ENCODE measurements at regions of chr1 and their contacts with region 1.

Region 1: GRCh38 chr1:163186862-163187261 is 15.9 kb downstream of the RGS5 start:
- DNase-seq: no peak
- ATAC-seq: no peak

Region 2: DNA sequence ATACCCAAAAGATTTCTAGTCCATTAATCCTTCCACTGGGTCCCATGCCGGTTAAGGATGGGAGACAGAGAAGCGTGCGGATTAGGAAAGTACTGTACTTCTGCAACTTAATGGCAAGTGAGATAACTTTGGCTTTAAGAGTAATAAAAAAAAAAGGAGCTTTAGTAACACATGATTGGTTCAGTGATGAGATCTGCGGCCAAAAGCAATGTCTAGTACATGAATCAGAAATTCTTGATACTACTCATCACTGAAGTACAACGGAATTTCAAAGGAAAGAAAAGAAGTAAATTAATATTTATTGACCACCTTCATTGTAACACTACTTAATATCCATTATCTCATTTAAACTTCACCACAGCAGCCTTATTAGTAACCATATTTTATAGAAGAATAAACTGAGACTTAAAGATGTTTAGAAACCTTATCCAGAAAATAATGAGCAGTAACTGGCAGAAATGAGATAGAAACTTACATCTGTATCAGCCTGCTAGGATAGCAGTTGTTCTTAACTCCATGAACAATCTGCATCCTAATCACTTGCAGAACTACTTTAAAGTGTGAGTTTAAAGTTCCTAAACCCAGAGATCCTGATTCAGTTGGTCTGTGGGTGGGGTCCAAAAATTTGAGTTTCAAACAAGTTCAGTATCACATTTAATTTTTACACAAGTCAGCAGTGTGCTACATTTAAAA is 120.8 kb after region 1 on chr1:
- intact Hi-C with region 1: loop called in 1 of 2 experiments (anchors 10 kb)
- DNase-seq: no peak
- ATAC-seq: no peak

Region 3: DNA sequence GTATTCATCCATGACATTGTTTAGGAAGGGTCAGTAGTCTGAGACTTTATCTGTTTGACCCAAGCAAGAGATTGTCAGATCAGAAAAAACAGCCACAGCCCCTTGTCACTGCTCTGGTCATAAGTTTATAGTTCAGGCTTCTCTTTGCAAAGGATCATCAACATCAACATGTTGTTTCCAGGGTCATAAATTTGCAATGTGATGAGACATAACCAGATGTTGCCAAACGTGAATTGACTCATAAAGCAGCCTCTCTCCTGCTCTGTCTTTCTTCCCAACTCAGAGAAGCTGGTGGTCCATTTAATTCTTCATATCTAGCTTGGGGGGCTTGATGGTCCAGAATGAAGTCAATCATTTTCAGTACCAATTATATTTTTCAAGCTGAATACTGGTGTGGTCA is 864.9 kb after region 1 on chr1:
- intact Hi-C with region 1: no loop called
- DNase-seq: no peak
- ATAC-seq: no peak

Measured in left colon (tissue), 2 donors.